ENCODE measurements at regions of chr2 and their contacts with region 1.

Region 1: GRCh38 chr2:207166039-207166348 is 246 bp upstream of the KLF7 start:
- DNase-seq: peak; percentile 99
- H3K4me3 Mint-ChIP-seq: peak overlapping the region; percentile 98
- H3K27ac Mint-ChIP-seq: peak overlapping the region; percentile 97
- H3K4me1 Mint-ChIP-seq: peaks cover 46% of the 10 kb centered on the region
- H3K27me3 Mint-ChIP-seq: no peaks in the 10 kb centered on the region

Region 2: GRCh38 chr2:206765242-206766056 is 400.5 kb before region 1 on chr2 and contains the starts of genes FASTKD2 and MDH1B:
- intact Hi-C with region 1: loop called (anchors 10 kb)
- DNase-seq: peak; percentile 80
- H3K4me3 Mint-ChIP-seq: peak within 1 kb of the TSS; percentile 94
- H3K27ac Mint-ChIP-seq: peak within 1 kb of the TSS; percentile 97
- H3K4me1 Mint-ChIP-seq: peaks cover 29% of the 10 kb centered on the region
- H3K27me3 Mint-ChIP-seq: peaks cover 3% of the 10 kb centered on the region
- total RNA-seq, gene FASTKD2: 34.5 and 34.7 TPM in 2 replicates
- total RNA-seq, gene MDH1B: 0.25 and 0.55 TPM in 2 replicates

Region 3: GRCh38 chr2:207046724-207047123 is 119.3 kb before region 1 on chr2:
- intact Hi-C with region 1: loop called (anchors 2 kb)
- DNase-seq: peak; percentile 17
- H3K4me3 Mint-ChIP-seq: no peak overlapping the region
- H3K27ac Mint-ChIP-seq: no peak overlapping the region
- H3K4me1 Mint-ChIP-seq: peaks cover 12% of the 10 kb centered on the region
- H3K27me3 Mint-ChIP-seq: peaks cover 10% of the 10 kb centered on the region

Region 4: DNA sequence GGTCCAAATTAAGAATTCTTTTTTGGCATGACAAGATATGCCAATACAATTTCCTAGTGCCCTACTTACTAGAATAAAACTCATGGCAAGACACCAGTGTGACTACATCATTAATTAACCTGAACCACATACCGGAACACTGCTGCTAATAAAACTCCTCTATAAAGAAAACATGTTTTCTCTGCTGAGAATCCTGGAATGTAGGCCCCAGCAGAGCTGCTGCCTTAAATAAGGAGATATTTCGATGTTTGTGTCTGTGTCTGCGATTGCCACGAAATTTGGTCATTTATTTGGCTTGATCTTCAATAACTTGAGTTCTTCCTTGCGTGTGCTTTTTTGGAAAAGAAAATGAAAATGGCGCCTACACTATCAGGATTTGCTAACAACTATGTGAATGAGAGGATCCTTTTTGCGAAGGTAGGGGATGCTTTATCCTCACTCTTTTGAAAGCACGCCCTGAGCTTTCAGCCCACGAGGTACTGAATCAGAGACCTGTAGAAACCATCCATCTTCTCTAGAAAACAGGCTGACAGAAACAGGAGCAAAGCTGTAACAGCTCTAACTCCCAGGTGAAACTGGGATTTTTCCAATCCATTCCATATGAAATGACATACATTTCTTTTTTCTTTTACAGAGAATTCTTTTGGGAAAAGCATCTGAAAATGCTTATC is 27.2 kb before region 1 on chr2:
- intact Hi-C with region 1: no loop called
- DNase-seq: no peak
- H3K4me3 Mint-ChIP-seq: no peak overlapping the region
- H3K27ac Mint-ChIP-seq: no peak overlapping the region
- H3K4me1 Mint-ChIP-seq: peaks cover 56% of the 10 kb centered on the region
- H3K27me3 Mint-ChIP-seq: no peaks in the 10 kb centered on the region

Region 5: DNA sequence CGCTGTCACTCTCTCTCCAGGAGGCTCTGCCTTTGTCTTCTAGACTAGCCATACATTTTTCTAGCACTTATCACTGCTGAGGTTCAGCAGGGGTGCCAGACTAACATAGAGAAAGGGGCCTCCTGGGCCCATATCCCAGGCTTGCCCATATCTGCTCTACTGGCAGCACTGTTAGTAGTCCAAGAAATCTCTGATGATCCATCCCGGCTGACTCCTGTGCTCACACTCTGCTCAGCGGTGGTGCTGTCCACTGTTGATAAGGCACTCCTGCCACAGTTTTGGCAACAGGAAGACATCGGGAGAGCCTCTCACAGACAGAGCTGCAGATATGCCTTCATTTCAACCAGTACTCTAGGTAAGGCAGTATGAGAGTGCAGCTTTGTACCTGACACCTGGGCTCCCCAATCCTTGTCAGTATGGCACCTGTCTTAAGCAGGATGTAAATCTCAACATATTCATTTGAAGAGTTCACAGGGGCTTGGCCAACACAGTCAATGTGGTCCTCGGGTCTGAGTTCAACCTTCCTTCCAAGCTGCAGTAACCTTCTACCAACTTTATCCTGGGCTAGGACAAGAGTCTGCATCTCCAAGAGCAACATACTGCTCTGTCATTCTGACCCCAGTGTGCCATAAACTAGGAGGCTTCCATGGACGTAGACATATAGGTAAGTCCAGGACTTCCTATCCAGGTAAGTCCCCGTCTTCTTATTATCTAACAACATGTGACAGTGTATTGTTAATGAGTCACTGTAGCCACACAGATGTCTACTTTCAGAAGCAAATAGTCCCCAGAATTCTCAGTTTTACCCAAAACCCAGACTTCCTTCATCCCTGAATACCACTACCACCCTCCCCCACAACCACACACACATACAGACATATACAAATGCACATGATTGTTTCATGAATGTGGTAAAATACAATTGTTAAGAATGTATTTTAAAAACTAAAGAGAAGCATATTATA is 16.5 kb before region 1 on chr2:
- intact Hi-C with region 1: loop called (anchors 2 kb)
- DNase-seq: no peak
- H3K4me3 Mint-ChIP-seq: no peak overlapping the region
- H3K27ac Mint-ChIP-seq: no peak overlapping the region
- H3K4me1 Mint-ChIP-seq: peaks cover 58% of the 10 kb centered on the region
- H3K27me3 Mint-ChIP-seq: no peaks in the 10 kb centered on the region

Region 6: DNA sequence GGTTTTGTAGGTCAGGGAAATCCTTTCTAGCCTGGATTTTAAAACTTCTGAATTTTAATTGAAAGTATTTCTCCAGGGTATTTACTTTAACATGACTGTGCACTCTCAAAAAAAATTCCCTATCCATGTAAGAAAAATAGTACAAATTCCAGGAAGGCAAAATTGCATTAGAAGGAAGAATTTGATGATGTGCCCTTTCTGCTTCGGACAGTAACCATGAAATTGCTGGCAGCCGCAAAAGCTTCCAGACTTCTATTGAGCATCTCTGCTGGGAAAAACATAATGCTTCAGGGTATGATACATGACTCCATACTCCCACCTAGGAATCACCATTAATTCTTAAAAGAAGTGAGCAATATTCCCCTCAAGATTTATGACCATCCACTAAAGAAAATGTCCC is 16.9 kb after region 1 on chr2:
- intact Hi-C with region 1: no loop called
- DNase-seq: no peak
- H3K4me3 Mint-ChIP-seq: no peak overlapping the region
- H3K27ac Mint-ChIP-seq: no peak overlapping the region
- H3K4me1 Mint-ChIP-seq: peaks cover 5% of the 10 kb centered on the region
- H3K27me3 Mint-ChIP-seq: no peaks in the 10 kb centered on the region

Region 7: GRCh38 chr2:207238831-207239701 is 73.1 kb after region 1 on chr2:
- intact Hi-C with region 1: loop called (anchors 1 kb)
- DNase-seq: no peak
- H3K4me3 Mint-ChIP-seq: peak overlapping the region; percentile 64
- H3K27ac Mint-ChIP-seq: peak overlapping the region; percentile 84
- H3K4me1 Mint-ChIP-seq: peaks cover 29% of the 10 kb centered on the region
- H3K27me3 Mint-ChIP-seq: no peaks in the 10 kb centered on the region

Region 8: DNA sequence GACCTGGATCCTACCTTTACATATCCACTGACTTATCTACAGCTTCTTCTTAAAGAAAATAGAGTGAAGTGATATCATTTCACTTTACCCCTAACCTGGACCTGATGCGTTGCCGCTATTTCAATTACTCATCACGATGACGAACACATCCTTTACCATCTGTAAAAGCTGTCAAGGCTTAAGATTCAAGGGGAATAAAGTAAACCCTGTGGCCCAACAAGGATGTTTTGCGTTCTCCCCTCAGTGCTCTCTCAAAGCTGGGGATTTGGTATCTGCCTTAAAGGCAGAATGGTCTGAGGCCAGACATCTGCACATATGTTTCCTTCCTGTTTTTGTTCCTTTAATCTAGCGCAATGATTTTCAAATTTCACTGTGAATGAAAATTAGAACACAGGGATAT is 99.9 kb after region 1 on chr2:
- intact Hi-C with region 1: no loop called
- DNase-seq: no peak
- H3K4me3 Mint-ChIP-seq: no peak overlapping the region
- H3K27ac Mint-ChIP-seq: no peak overlapping the region
- H3K4me1 Mint-ChIP-seq: peaks cover 10% of the 10 kb centered on the region
- H3K27me3 Mint-ChIP-seq: no peaks in the 10 kb centered on the region

Region 9: DNA sequence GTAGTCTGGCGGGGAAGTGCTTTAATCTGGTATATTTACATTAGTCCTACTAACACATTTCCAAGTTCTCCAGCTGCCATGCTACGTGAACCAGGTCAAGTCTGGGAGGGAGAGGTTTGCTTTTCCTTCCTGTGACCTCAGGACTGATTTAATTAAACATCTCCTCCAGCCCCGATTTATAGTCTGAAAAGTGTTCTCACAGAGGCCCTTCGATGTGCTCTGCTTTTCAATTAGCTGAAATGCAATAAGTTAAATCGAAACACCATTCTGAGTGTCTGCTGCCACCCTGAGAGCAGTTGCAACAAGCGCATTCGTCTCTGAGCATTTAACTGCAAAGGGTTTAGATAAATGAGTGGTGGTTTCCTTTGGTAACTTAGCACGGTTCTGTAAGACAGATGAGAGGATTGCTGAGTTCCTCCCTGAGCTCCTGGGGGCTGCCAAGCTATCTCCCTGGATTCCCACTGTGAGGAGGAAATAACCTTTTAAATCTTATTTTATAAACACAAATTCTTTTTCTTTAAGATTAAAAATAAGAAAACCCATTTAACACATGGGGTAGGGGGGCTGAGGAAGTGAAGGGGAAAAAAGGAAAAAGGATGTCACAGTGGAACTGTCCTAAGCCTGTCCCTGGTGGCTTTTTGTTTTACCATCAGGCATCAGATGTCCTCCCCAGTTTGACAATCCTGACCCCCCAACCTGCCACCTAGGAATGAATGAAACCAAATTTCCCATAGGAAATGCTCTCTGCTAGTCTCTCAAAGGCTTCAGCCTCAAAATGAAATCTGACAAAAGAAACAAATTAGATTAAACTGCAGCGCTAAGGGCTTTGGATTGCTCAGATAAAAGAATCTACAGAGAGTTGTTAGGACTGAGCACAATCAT is 307.3 kb after region 1 on chr2:
- intact Hi-C with region 1: loop called (anchors 2 kb)
- DNase-seq: peak; percentile 37
- H3K4me3 Mint-ChIP-seq: no peak overlapping the region
- H3K27ac Mint-ChIP-seq: no peak overlapping the region
- H3K4me1 Mint-ChIP-seq: peaks cover 38% of the 10 kb centered on the region
- H3K27me3 Mint-ChIP-seq: no peaks in the 10 kb centered on the region